ENCODE measurements at regions of chr1 and their contacts with region 1.

Region 1: DNA sequence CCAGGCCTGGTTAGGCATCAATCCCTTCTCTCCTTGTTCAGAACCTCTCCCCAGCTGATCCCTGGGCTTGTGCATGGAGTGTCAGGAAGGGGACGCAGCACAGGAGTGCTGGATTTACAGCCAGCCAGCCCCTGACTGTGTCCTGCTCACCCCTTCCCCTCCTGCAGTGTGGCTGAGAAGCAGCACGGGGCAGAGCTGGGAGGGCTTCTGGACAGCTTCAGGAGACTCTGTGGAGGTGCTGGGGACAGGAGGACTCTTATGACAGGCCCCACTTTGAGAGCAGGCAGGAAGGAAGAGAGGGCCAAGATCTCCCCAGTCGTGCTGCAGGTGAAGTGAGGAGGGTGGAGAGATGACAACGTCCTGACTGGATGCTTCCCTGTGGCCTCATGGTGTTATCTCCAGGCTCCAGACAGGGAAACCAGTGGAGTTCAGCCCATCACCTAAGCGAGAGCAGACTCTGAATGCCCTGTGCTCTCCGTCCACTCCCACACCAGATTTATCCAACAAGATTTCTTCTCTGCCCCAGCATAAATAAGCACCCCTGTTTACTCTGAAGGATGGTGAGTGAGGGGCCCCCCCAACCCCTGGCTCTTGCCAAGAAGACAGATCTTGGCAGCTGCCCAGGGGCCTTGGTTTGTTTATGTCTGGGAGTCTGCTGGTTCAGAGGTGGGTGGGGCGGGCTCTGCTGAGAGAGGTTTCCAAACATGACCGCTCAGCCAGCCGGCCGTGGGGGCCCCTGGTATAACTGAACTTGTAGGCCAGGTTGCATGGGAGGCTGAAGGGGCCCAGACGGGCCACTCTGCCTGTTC is 21.3 kb downstream of the TMCC2 start:
- DNase-seq: no peak
- ATAC-seq: no peak
- H3K4me3 ChIP-seq: no peak overlapping the region
- H3K27ac ChIP-seq: no peak overlapping the region
- H3K4me1 ChIP-seq: no peaks in the 10 kb centered on the region
- H3K27me3 ChIP-seq: peaks cover 2 to 3% of the 10 kb centered on the region in 2 experiments; a peak in 3 of 4 replicates
- CTCF ChIP-seq: no peak
- EP300 ChIP-seq: no peak
- POLR2A ChIP-seq: no peak
- RAD21 ChIP-seq: no peak

Region 2: GRCh38 chr1:205049479-205049878 is 199.5 kb before region 1 on chr1:
- CTCF ChIA-PET with region 1: no interaction called
- POLR2A ChIA-PET with region 1: no interaction called
- RAD21 ChIA-PET with region 1: no interaction called
- SMC1A ChIA-PET with region 1: no interaction called
- in situ Hi-C with region 1: no loop called
- intact Hi-C with region 1: no loop called
- DNase-seq: no peak
- ATAC-seq: no peak
- H3K4me3 ChIP-seq: no peak overlapping the region
- H3K27ac ChIP-seq: no peak overlapping the region
- H3K4me1 ChIP-seq: no peaks in the 10 kb centered on the region
- H3K27me3 ChIP-seq: peaks cover 0 to 4% of the 10 kb centered on the region in 2 experiments; a peak in 3 of 4 replicates
- CTCF ChIP-seq: no peak
- EP300 ChIP-seq: no peak
- POLR2A ChIP-seq: no peak
- RAD21 ChIP-seq: no peak

Region 3: DNA sequence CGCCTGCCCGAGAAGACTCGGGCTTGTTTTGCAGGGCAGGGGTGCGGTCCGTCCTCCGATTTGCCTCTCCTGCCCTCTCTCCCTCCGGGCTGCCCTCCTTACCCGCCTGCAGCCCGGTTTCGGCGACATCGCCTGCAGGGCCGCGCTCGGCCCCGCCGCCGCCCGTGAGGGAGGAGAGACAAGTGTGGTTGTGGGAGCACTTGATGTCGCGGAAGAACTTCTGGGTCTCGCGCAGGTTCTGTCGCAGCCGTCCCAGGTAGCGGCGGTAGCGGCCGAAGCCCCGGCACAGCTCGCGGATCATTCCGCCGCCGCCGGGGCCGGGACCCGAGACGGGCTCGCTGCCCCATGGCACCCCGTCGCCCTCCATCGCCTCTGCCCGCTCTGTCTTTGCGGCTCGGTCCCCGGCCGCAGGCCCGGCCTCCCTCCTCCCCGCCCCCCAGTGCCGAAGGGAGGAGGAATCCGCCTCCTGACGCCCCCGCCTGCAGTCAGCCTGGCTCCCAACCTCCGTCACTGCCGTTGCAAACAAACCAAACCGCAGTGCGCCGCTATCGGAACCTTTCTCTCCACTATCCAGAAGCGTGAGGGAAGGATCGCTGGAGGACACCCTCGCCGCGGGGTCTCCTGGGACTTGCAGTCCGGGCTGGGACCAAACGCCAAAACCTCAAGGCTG is 37.7 kb before region 1 on chr1 and contains the start of gene DSTYK:
- CTCF ChIA-PET with region 1: no interaction called
- POLR2A ChIA-PET with region 1: no interaction called
- RAD21 ChIA-PET with region 1: no interaction called
- SMC1A ChIA-PET with region 1: no interaction called
- in situ Hi-C with region 1: no loop called
- intact Hi-C with region 1: no loop called
- DNase-seq: peak; percentile 70
- ATAC-seq: peak; percentile 89
- H3K4me3 ChIP-seq: peak within 1 kb of the TSS; percentile 88
- H3K27ac ChIP-seq: peak within 1 kb of the TSS; percentile 42
- H3K4me1 ChIP-seq: peaks cover 8% of the 10 kb centered on the region; the same call in 1 of the 2 replicates
- H3K27me3 ChIP-seq: no peaks in the 10 kb centered on the region
- CTCF ChIP-seq: 0 out of 6 replicates have a peak, but pooled peaks of 1 of the 3 experiments have one; percentile 1
- EP300 ChIP-seq: peak in 1 of 2 experiments; percentile 48; a peak in 2 of 4 replicates
- POLR2A ChIP-seq: peak; percentile 91
- RAD21 ChIP-seq: no peak
- polyA plus RNA-seq, gene DSTYK: 2.7 to 3.4 TPM

Region 4: DNA sequence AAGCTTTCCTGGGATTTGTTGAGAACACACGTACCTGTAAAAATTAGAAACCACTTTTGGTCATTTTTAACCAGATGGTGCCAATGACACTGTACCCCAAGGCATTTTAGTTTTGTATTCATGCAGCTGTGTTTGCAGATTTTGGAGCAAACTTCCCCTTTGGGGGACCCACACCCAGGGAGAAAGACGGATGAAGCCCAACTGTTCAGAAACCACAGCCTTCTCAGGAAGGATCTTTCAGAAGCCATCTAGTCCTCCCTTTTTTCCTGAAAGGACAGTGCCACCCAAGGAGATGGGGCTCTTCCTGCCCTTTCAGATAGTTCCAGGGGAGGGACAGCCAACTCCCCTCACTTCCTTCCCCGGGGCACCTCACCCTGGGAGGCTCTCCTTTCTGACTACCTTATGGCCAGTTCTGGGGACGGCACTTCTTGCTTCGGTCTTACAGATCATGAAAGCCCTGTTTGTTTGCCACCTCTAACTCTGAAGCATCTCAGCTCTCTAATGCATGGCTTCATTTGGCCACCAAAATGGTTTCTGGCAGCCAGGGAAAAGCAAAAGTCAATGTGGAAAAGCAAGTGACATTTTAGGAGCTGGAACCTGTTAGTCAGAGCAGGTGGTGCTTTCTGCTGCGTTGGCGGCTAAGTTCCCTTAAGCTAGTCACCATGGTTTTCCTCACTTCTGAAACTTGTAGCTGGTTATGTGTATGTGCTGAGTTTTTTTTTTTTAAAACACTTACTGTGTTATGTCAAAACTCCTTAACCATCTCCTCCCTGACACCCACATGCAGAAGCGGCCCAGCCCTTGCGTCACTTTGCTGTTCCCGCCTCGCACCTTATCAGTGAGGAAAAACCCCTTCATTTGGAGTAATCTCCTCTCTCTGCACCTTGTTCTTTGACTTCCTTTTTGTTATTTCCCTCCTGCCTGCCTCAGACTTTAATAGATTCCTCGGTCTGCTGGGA is 11.2 kb before region 1 on chr1:
- CTCF ChIA-PET with region 1: interaction called, 836 read pairs
- POLR2A ChIA-PET with region 1: interaction called, 11 read pairs
- RAD21 ChIA-PET with region 1: interaction called, 728 read pairs
- SMC1A ChIA-PET with region 1: interaction called, 427 read pairs
- in situ Hi-C with region 1: no loop called
- intact Hi-C with region 1: no loop called
- DNase-seq: no peak
- ATAC-seq: peak; percentile 70
- H3K4me3 ChIP-seq: no peak overlapping the region
- H3K27ac ChIP-seq: no peak overlapping the region
- H3K4me1 ChIP-seq: peaks cover 18% of the 10 kb centered on the region
- H3K27me3 ChIP-seq: no peaks in the 10 kb centered on the region; a peak in 1 of 4 replicates
- CTCF ChIP-seq: no peak
- EP300 ChIP-seq: no peak; a peak in 1 of 4 replicates
- POLR2A ChIP-seq: no peak
- RAD21 ChIP-seq: no peak

Measured in GM12878 (cell line).